BJ (cell line): ENCODE measurements at regions of chr3 and their contacts with region 1.

Region 1: GRCh38 chr3:106794442-106794841 is 582.8 kb upstream of the CCDC54 start:
- DNase-seq: no peak
- H3K4me3 ChIP-seq: no peak overlapping the region
- H3K27me3 ChIP-seq: no peaks in the 10 kb centered on the region
- CTCF ChIP-seq: no peak

Region 2: GRCh38 chr3:106699122-106699521 is 95.3 kb before region 1 on chr3:
- CTCF ChIA-PET with region 1: no interaction called
- POLR2A ChIA-PET with region 1: no interaction called
- DNase-seq: no peak
- H3K4me3 ChIP-seq: no peak overlapping the region
- H3K27me3 ChIP-seq: no peaks in the 10 kb centered on the region
- CTCF ChIP-seq: no peak

Region 3: DNA sequence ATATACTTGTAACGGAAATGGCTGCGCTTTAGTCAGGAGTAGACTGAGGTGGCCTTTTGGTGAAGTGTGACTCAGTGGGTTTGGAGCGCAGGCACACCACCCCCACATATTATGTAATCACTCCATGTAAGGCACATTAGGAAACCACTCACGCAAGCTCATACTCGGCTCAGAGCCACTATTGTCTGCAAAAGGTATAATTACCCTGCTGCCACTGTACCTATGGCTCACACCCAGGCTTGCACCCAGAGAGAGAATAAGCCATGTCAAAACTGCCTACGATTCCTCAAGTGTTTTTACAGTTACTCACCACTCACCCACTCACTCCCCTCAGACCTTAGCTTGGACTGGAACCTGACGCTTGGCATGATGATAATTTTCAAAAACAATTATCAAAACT is 29.1 kb before region 1 on chr3:
- CTCF ChIA-PET with region 1: no interaction called
- POLR2A ChIA-PET with region 1: no interaction called
- DNase-seq: no peak
- H3K4me3 ChIP-seq: no peak overlapping the region
- H3K27me3 ChIP-seq: no peaks in the 10 kb centered on the region
- CTCF ChIP-seq: no peak

Region 4: GRCh38 chr3:106811376-106811775 is 16.9 kb after region 1 on chr3:
- CTCF ChIA-PET with region 1: no interaction called
- POLR2A ChIA-PET with region 1: interaction called, 14 read pairs
- DNase-seq: no peak
- H3K4me3 ChIP-seq: no peak overlapping the region
- H3K27me3 ChIP-seq: no peaks in the 10 kb centered on the region
- CTCF ChIP-seq: no peak